Mammary epithelial cell (primary cell): ENCODE measurements at regions of chr11 and their contacts with region 1.

Region 1: DNA sequence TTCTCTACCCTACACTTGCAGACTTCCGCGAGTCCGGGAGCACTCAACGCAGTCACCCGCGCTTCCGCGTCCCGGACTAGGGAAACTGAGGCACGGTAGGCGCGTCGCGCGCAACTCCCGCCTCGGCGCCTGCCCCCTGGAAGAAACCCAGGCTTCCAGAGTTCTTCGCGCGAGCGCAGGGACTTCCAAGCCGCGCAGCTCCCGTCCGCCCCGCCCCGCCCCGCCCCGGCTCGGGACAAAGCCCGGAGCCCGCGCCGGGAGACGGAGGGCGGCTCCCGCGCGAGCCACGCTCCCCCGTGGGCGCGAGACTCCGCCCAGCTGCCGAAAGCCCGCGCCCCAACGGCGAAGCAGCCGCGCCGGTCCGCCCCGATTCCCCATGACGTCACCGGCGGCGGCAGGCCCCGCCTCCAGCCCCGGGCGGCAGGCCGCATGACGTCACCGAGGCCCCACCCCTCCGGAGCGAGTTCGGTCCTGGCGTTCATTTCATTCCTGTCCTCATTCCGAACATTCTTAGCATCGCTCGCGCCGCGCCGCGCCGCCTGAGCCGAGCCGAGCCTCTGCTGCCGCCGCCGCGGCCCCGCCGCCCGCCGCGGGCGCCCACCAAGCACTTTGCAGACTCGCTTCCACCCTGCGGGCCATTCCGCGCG is at the start of gene TEAD1:
- DNase-seq: peak; percentile 91
- H3K4me3 ChIP-seq: peak within 1 kb of the TSS; percentile 70 to 85 (median 84)
- H3K27ac ChIP-seq: peak within 1 kb of the TSS; percentile 84
- H3K4me1 ChIP-seq: peaks cover 22% of the 10 kb centered on the region
- H3K27me3 ChIP-seq: no peaks in the 10 kb centered on the region
- CTCF ChIP-seq: no peak
- total RNA-seq, gene TEAD1: 93.9 to 107 TPM

Region 2: GRCh38 chr11:12331239-12331874 is 342.7 kb before region 1 on chr11:
- CTCF ChIA-PET with region 1: no interaction called
- dilution Hi-C with region 1: no loop called
- in situ Hi-C with region 1: no loop called
- intact Hi-C with region 1: loop called (anchors 5 kb)
- DNase-seq: peak; percentile 70
- H3K4me3 ChIP-seq: no peak overlapping the region
- H3K27ac ChIP-seq: no peak overlapping the region
- H3K4me1 ChIP-seq: peaks cover 11% of the 10 kb centered on the region
- H3K27me3 ChIP-seq: no peaks in the 10 kb centered on the region
- CTCF ChIP-seq: peak; percentile 69 to 81

Region 3: DNA sequence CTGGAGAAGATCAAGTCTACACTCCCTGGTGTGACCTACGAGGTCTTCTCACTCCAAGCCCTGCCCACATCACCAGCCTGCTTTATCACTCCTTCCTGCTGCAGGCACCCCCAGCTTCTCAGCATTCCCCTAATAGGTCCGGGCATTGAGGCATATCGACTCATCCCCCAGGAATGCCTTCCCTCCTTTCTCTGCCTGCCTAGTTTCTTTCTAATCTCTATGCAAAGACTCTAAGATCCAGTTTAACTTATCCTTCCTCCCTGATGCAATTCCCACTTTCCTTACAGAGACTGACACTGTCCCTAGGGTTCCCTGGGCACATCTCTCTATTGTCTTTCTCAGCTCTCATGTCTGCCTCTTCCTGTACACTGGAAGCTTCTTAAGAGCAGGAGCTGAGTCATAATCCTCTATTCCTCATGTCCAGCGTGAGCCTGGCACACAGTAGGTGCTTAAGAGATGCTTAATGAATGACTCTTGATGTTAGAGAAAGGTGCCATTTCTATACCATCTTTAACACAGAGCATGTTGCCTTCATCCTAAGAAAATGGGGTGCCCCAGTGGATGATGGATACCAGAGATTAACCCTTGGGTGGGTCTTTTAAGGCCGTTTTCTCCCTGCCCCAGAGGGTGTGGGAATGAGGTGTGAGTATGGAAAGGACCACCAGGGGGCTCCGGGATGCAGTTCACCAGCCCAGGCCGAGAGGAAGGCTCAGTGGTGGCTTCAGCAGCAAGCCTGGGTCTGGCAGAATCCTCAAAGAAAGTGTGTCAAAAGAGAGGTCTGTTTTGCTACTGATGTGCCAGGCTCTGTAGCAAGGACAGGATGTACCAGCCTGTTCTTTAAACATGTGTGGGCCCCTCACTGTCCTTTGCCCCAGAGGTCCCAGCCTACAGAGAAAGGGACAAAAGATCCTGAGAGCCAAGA is 262.0 kb before region 1 on chr11:
- CTCF ChIA-PET with region 1: no interaction called
- dilution Hi-C with region 1: no loop called
- in situ Hi-C with region 1: no loop called
- intact Hi-C with region 1: loop called (anchors 1 kb)
- DNase-seq: peak; percentile 86
- H3K4me3 ChIP-seq: no peak overlapping the region
- H3K27ac ChIP-seq: peak overlapping the region; percentile 81
- H3K4me1 ChIP-seq: peaks cover 45% of the 10 kb centered on the region
- H3K27me3 ChIP-seq: no peaks in the 10 kb centered on the region
- CTCF ChIP-seq: peak; percentile 74 to 76

Region 4: GRCh38 chr11:12631651-12632050 is 42.4 kb before region 1 on chr11:
- CTCF ChIA-PET with region 1: no interaction called
- dilution Hi-C with region 1: no loop called
- in situ Hi-C with region 1: no loop called
- intact Hi-C with region 1: loop called (anchors 1 kb)
- DNase-seq: no peak
- H3K4me3 ChIP-seq: no peak overlapping the region
- H3K27ac ChIP-seq: no peak overlapping the region
- H3K4me1 ChIP-seq: no peaks in the 10 kb centered on the region
- H3K27me3 ChIP-seq: no peaks in the 10 kb centered on the region
- CTCF ChIP-seq: no peak

Region 5: DNA sequence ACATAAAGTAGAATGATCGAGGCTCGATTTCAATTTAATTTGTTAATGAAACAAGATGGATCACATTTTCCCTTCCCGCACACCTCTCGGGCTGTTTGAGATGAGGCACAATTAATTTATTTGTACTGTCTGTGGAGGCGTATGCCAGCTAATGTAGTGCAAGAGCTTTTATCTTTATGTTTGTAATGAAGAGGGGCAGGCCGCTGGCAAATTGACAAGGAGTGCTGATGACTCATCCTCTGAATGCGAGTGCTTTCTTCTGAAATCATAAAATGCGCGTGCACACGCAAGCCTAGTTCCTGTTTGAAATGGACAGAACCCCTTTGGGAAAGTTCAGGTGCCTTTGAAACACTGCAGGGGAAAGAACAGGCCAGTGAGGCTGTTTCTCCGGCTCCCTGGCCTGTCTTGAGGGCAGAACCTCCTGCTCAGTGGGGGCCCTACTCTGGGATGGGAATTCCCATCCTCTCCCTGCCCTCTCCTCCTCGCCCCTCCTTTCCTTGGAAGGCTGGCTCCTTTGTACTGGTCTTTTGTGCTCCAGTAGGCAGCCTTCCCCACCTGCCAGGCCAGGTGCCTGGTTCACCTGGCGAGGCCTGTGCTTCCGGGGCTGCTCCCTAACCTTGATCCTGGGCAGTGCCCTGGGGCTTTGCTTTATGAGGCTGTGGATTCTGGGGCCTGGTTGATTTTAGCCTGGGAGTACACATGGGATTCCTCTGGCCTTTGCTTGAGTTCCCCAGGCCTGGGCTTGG is 50.4 kb after region 1 on chr11:
- CTCF ChIA-PET with region 1: no interaction called
- dilution Hi-C with region 1: no loop called
- in situ Hi-C with region 1: no loop called
- intact Hi-C with region 1: loop called (anchors 2 kb)
- DNase-seq: peak; percentile 92
- H3K4me3 ChIP-seq: peak overlapping the region in 2 of 3 experiments; percentile 4 to 15
- H3K27ac ChIP-seq: peak overlapping the region; percentile 90
- H3K4me1 ChIP-seq: peaks cover 52% of the 10 kb centered on the region
- H3K27me3 ChIP-seq: no peaks in the 10 kb centered on the region
- CTCF ChIP-seq: no peak

Region 6: GRCh38 chr11:12769834-12770345 is 95.8 kb after region 1 on chr11:
- CTCF ChIA-PET with region 1: no interaction called
- dilution Hi-C with region 1: no loop called
- in situ Hi-C with region 1: no loop called
- intact Hi-C with region 1: loop called (anchors 2 kb)
- DNase-seq: peak; percentile 81
- H3K4me3 ChIP-seq: no peak overlapping the region
- H3K27ac ChIP-seq: peak overlapping the region; percentile 86
- H3K4me1 ChIP-seq: peaks cover 39% of the 10 kb centered on the region
- H3K27me3 ChIP-seq: no peaks in the 10 kb centered on the region
- CTCF ChIP-seq: no peak

Region 7: GRCh38 chr11:12888525-12889158 is 214.6 kb after region 1 on chr11:
- CTCF ChIA-PET with region 1: no interaction called
- dilution Hi-C with region 1: no loop called
- in situ Hi-C with region 1: loop called in 1 of 2 experiments (anchors 5 kb)
- intact Hi-C with region 1: loop called (anchors 1 kb)
- DNase-seq: peak; percentile 69
- H3K4me3 ChIP-seq: no peak overlapping the region
- H3K27ac ChIP-seq: no peak overlapping the region
- H3K4me1 ChIP-seq: peaks cover 16% of the 10 kb centered on the region
- H3K27me3 ChIP-seq: no peaks in the 10 kb centered on the region
- CTCF ChIP-seq: peak; percentile 69 to 77